T-cell (primary cell): ENCODE measurements at regions of chr6 and their contacts with region 1.

Region 1: DNA sequence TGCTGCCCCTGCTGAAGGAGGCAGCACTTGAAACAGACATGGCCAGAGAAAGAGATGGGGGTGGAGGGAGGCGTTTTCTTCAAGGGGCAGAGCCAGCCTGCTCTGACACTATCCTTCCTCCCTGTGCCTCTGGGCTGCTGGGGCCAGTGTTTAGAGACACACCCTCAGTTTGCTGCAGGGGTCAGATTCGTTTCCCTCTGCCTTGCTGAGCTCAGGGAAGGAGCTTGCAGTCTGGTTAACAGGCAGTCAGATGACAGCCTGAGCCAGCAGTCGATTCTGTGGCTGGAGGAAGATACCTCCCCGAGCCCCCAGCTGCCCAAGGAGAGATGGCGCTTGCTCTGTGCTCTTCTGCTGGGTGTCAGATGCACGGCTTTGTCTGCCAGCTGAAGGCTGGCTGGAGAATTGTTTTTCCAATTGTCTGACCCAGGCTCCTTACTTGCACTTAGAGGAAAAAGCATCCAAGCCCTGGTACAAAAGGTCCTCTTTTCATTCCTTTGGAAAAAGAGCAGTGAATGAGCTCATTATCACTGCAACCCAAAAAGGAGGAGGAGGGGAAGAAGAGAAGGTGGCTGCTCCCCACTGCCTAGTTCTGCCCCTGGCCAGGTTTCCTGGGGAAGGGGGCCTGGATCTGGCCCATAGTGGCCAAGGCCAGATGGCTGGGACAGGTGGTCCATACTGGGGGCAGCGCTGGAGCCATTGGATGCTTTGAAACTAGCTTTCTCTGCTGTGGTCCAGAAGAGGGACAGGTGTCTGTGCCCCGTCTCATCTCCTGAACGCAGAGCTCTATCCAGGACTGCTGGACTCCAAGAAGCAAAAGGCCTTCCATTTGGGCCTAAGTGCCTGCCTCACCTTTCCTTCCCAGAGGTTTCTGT is 88.2 kb downstream of the TCP11 start:
- DNase-seq: no peak
- ATAC-seq: no peak
- H3K4me3 ChIP-seq: no peak overlapping the region
- H3K4me3 Mint-ChIP-seq: no peak overlapping the region
- H3K27ac ChIP-seq: no peak overlapping the region
- H3K27ac Mint-ChIP-seq: no peak overlapping the region
- H3K4me1 ChIP-seq: peaks cover 8 to 11% of the 10 kb centered on the region in 2 experiments
- H3K4me1 Mint-ChIP-seq: peaks cover 0 to 2% (median 0%) of the 10 kb centered on the region in 3 donors
- H3K27me3 ChIP-seq: no peaks in the 10 kb centered on the region
- H3K27me3 Mint-ChIP-seq: no peaks in the 10 kb centered on the region

Region 2: DNA sequence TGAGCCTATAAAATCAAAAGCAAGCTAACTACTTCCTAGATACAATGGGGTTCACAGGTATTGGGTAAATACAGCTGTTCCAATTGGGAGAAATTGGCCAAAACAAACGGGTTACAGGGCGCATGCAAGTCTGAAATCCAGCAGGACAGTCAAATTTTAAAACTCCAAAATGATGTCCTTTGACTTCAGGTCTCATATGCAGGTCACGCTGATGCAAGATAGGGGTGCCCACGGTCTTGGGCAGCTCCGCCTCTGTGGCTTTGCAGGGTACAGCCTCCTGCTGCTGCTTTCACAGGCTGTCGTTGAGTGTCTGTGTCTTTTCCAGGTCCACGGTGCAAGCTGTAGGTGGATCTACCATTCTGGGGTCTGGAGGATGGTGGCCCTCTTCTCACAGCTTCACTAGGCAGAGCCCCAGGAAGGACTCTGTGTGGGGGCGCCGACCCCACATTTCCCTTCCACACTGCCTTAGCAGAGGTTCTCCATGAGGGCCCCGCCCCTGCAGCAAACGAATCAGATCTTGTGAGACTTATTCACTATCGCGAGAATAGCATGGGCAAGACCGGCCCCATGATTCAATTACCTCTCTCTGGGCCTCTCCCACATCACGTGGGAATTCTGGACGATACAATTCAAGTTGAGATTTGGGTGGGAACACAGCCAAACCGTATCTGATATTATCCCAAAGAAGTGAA is 792.2 kb before region 1 on chr6:
- CTCF ChIA-PET with region 1: no interaction called
- POLR2A ChIA-PET with region 1: no interaction called
- DNase-seq: no peak
- ATAC-seq: no peak
- H3K4me3 ChIP-seq: no peak overlapping the region
- H3K4me3 Mint-ChIP-seq: no peak overlapping the region
- H3K27ac ChIP-seq: no peak overlapping the region
- H3K27ac Mint-ChIP-seq: no peak overlapping the region
- H3K4me1 ChIP-seq: no peaks in the 10 kb centered on the region
- H3K4me1 Mint-ChIP-seq: no peaks in the 10 kb centered on the region
- H3K27me3 ChIP-seq: no peaks in the 10 kb centered on the region
- H3K27me3 Mint-ChIP-seq: no peaks in the 10 kb centered on the region

Region 3: DNA sequence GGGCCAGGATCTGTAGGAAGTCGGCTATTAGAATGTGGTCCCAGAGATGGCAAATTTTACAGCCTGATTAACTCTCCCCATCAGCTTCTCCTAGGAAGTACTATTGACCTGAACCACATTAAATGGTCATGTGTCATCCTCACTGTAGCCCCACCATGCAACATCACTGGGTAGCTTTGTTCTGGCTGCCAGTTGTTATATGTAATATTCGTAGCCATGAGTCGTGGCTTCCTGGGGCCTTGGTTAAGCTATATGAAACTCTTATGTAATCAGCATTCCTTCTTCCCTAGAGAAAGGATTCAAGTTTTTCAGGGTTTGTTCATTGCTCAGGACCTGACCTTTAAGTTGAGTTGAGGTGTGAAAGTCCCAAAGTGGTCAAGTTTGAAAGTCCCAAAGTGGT is 38.1 kb before region 1 on chr6:
- CTCF ChIA-PET with region 1: no interaction called
- POLR2A ChIA-PET with region 1: no interaction called
- DNase-seq: no peak
- ATAC-seq: no peak
- H3K4me3 ChIP-seq: no peak overlapping the region
- H3K4me3 Mint-ChIP-seq: no peak overlapping the region
- H3K27ac ChIP-seq: no peak overlapping the region
- H3K27ac Mint-ChIP-seq: no peak overlapping the region
- H3K4me1 ChIP-seq: no peaks in the 10 kb centered on the region
- H3K4me1 Mint-ChIP-seq: no peaks in the 10 kb centered on the region
- H3K27me3 ChIP-seq: no peaks in the 10 kb centered on the region
- H3K27me3 Mint-ChIP-seq: no peaks in the 10 kb centered on the region

Region 4: GRCh38 chr6:35064757-35065440 is 12.0 kb after region 1 on chr6:
- CTCF ChIA-PET with region 1: no interaction called
- POLR2A ChIA-PET with region 1: no interaction called
- DNase-seq: no peak
- ATAC-seq: no peak
- H3K4me3 ChIP-seq: no peak overlapping the region
- H3K4me3 Mint-ChIP-seq: no peak overlapping the region
- H3K27ac ChIP-seq: no peak overlapping the region
- H3K27ac Mint-ChIP-seq: no peak overlapping the region
- H3K4me1 ChIP-seq: no peaks in the 10 kb centered on the region
- H3K4me1 Mint-ChIP-seq: no peaks in the 10 kb centered on the region
- H3K27me3 ChIP-seq: no peaks in the 10 kb centered on the region
- H3K27me3 Mint-ChIP-seq: no peaks in the 10 kb centered on the region

Region 5: GRCh38 chr6:35149891-35150566 is 97.1 kb after region 1 on chr6:
- CTCF ChIA-PET with region 1: no interaction called
- POLR2A ChIA-PET with region 1: interaction called in 1 of 2 experiments, 12 read pairs
- DNase-seq: no peak
- ATAC-seq: no peak
- H3K4me3 ChIP-seq: no peak overlapping the region
- H3K4me3 Mint-ChIP-seq: no peak overlapping the region
- H3K27ac ChIP-seq: no peak overlapping the region
- H3K27ac Mint-ChIP-seq: no peak overlapping the region
- H3K4me1 ChIP-seq: no peaks in the 10 kb centered on the region
- H3K4me1 Mint-ChIP-seq: peaks cover 0 to 6% (median 4%) of the 10 kb centered on the region in 3 donors
- H3K27me3 ChIP-seq: peaks cover 0 to 8% of the 10 kb centered on the region in 2 experiments
- H3K27me3 Mint-ChIP-seq: peaks cover 3 to 6% of the 10 kb centered on the region in 2 donors

Region 6: DNA sequence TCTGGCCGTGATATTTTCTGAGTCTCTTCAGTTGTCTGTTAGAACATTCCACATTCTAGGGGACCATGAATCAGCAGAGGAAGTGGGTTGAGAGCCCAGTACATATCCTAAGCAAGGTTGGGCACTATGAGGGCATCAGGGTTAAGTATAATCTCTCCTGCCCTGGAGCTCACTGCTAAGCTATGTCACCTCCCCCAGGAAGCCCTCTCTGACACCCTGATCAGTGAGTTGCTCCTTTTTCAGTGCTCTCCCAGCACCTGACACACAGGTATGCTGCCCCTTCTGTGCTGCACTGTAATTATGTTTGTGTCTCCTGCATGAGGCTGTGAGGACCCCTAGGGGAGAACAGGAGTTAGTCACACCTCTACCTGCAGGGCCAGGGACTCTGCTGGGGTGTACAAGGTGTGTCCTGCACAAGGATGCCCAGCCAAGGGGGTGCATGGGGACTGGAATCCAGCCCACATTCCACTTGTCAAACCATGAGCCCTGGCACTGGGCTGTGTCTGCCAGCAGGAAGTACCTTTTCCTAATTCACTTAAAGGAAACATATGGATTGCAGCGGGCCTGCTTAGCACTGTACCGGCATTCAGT is 1648.6 kb after region 1 on chr6:
- CTCF ChIA-PET with region 1: no interaction called
- POLR2A ChIA-PET with region 1: no interaction called
- DNase-seq: peak in 2 of 35 experiments; percentile 13 to 30
- ATAC-seq: peak in 2 of 4 experiments; percentile 44 to 48
- H3K4me3 ChIP-seq: no peak overlapping the region
- H3K4me3 Mint-ChIP-seq: no peak overlapping the region
- H3K27ac ChIP-seq: no peak overlapping the region
- H3K27ac Mint-ChIP-seq: no peak overlapping the region
- H3K4me1 ChIP-seq: no peaks in the 10 kb centered on the region
- H3K4me1 Mint-ChIP-seq: peaks cover 0 to 7% (median 0%) of the 10 kb centered on the region in 3 donors
- H3K27me3 ChIP-seq: peaks cover 0 to 13% of the 10 kb centered on the region in 2 experiments
- H3K27me3 Mint-ChIP-seq: peaks cover 0 to 3% of the 10 kb centered on the region in 2 donors